Psoas muscle (tissue), 8 donors: ENCODE measurements at regions of chr12 and their contacts with region 1.

Region 1: DNA sequence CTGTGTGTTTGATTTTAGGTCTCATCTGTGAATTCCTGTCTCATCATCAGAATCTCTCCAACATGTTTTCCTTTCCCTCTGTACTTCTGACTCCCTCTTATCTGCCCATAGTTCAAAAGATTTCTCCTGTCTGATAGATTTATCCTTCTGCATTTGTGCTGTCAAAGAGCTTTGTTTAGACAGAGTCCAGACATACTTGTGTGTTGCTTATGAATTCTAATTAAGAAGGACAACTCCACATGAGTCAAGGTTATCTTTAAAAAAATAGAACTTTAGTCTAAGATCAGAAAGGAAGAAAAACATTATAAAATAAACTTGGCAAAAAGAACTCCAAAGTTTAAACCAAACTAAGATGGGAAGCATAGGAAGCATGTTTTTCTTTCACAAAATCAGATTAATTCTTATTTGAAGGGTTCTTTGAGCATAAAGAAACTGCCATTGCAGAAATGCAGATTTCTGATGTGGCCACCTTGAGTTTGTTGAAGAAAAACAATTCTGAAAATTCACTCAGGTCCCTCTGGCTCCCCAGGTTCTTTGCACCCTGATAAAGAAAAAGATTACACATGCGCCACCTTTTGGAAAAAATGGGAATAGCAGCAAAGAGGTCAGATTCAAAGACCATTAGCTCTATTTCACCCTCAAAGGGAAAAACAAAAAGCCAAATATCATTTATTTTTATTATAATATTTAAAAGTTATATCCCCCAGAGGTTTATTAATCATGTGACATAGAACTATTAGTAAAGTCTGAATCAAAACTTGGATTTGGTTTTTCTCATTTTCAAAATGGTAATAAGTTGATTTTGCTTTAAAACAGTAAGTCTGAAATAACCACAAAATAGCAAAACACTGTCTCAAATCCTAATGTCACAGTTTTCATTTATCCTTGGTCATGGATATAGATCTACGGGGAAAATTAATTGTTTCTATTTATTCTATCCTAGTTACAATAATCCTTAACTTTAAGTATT is 143.7 kb upstream of the DCN start:
- DNase-seq: no peak
- ATAC-seq: peak in 1 of 4 donors; percentile 56
- H3K4me3 ChIP-seq: no peak overlapping the region
- H3K27ac ChIP-seq: no peak overlapping the region
- H3K4me1 ChIP-seq: no peaks in the 10 kb centered on the region
- H3K27me3 ChIP-seq: no peaks in the 10 kb centered on the region
- CTCF ChIP-seq: peak; percentile 58

Region 2: DNA sequence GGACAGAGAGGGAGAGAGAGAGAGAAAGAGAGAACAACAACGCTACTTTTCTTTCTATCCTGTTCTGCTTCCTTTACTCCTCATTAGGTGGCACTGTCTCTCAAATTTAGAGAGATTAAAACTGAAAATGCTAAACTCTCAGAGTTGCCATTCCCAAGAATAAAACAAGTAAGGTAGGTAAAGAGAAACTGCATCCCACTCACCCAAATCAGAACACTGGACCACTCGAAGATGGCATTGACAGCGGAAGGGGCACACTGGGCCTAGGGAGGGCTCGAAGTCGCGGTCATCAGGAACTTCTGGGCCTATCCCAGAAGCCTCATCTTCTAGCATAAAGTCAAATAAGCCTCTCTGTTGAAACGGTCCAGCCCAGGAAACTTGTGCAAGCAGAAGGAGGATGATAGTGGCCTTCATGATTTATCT is 148.2 kb before region 1 on chr12:
- intact Hi-C with region 1: loop called in 1 of 2 experiments (anchors 10 kb)
- DNase-seq: peak; percentile 13 to 42
- ATAC-seq: peak in 3 of 4 donors; percentile 28 to 56 (median 52)
- H3K4me3 ChIP-seq: peak overlapping the region; percentile 45
- H3K27ac ChIP-seq: no peak overlapping the region
- H3K4me1 ChIP-seq: no peaks in the 10 kb centered on the region
- H3K27me3 ChIP-seq: no peaks in the 10 kb centered on the region
- CTCF ChIP-seq: peak; percentile 34

Region 3: GRCh38 chr12:91194500-91194899 is 131.8 kb before region 1 on chr12:
- intact Hi-C with region 1: no loop called
- DNase-seq: no peak
- ATAC-seq: no peak
- H3K4me3 ChIP-seq: no peak overlapping the region
- H3K27ac ChIP-seq: no peak overlapping the region
- H3K4me1 ChIP-seq: no peaks in the 10 kb centered on the region
- H3K27me3 ChIP-seq: no peaks in the 10 kb centered on the region
- CTCF ChIP-seq: no peak